CD4-positive, alpha-beta memory T cell (primary cell): ENCODE measurements at regions of chr12 and their contacts with region 1.

Region 1: DNA sequence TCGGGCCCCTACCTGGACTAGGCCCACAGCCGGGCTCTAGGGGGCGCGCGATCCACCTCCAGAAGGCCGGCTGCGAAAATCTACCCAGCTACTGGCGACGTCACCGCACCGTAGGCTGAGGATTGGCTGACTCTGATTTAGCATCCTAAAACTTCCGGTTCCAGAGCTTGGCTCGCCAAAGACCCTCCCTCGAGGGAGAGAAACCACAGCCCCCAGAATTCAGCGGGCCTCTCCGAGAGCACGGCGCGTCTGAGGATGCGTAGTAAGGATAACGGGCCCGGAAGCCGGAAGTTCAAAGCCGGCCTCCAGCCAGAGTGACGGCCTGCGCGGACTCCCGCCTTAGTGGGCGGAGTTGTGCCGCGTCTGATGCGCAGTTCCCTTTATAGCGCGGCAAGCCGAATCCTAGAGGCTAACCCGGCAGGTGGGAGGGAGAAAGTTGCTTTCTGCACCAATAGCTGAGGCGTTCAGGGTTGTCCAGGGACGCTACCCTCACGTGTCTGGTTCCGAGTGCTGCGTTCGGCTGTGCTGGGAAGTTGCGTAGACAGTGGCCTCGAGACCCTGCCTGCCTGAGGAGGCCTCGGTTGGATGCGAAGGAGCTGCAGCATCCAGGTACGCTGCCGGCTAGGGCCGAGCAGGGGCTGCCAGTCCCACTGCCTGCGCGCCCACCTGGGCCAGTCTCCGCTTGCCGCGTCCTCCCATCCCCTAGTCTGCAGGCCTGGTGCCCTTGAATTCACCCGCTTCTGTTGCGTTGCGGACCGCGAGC is at the start of gene COX14:
- DNase-seq: peak; percentile 98 to 100 (median 100)
- H3K4me3 ChIP-seq: peak within 1 kb of the TSS; percentile 98 to 99
- H3K4me3 Mint-ChIP-seq: peak within 1 kb of the TSS; percentile 93 to 100 (median 96)
- H3K27ac ChIP-seq: peak within 1 kb of the TSS; percentile 93
- H3K27ac Mint-ChIP-seq: peak within 1 kb of the TSS; percentile 93 to 100 (median 98)
- H3K4me1 ChIP-seq: peaks cover 43% of the 10 kb centered on the region
- H3K4me1 Mint-ChIP-seq: peaks cover 18 to 50% (median 35%) of the 10 kb centered on the region in 4 donors
- H3K27me3 ChIP-seq: no peaks in the 10 kb centered on the region
- H3K27me3 Mint-ChIP-seq: peaks cover 0 to 1% of the 10 kb centered on the region in 2 donors
- total RNA-seq, gene COX14: 53.3 to 61.6 TPM

Region 2: GRCh38 chr12:49683599-49684309 is 428.1 kb before region 1 on chr12:
- CTCF ChIA-PET with region 1: no interaction called
- POLR2A ChIA-PET with region 1: no interaction called
- intact Hi-C with region 1: no loop called
- DNase-seq: no peak
- H3K4me3 ChIP-seq: no peak overlapping the region
- H3K4me3 Mint-ChIP-seq: no peak overlapping the region
- H3K27ac ChIP-seq: no peak overlapping the region
- H3K27ac Mint-ChIP-seq: peak overlapping the region in 4 of 7 donors; percentile 3 to 57 (median 56)
- H3K4me1 ChIP-seq: peaks cover 8% of the 10 kb centered on the region
- H3K4me1 Mint-ChIP-seq: peaks cover 24 to 46% (median 32%) of the 10 kb centered on the region in 4 donors
- H3K27me3 ChIP-seq: no peaks in the 10 kb centered on the region
- H3K27me3 Mint-ChIP-seq: no peaks in the 10 kb centered on the region

Region 3: DNA sequence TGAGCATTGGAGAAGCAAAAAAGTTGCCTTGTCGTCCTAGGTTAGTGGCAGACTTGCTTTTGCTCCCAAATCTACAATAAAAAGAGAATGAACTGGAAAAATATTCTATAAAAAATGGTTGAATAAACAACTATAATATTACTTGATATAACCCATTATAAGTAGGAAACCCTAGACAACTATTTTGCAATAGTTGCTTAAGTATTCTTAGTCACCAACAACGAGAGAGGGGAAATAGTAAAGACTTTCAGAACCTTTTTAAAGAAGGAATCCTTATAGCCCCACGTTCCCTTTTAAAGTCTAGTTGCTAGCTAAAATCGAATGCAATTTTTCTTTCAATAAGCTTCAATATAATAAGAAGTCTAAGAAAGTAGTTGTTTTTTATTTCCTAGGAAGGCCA is 121.6 kb before region 1 on chr12:
- CTCF ChIA-PET with region 1: no interaction called
- POLR2A ChIA-PET with region 1: no interaction called
- intact Hi-C with region 1: no loop called
- DNase-seq: no peak
- H3K4me3 ChIP-seq: no peak overlapping the region
- H3K4me3 Mint-ChIP-seq: no peak overlapping the region
- H3K27ac ChIP-seq: no peak overlapping the region
- H3K27ac Mint-ChIP-seq: no peak overlapping the region
- H3K4me1 ChIP-seq: no peaks in the 10 kb centered on the region
- H3K4me1 Mint-ChIP-seq: no peaks in the 10 kb centered on the region
- H3K27me3 ChIP-seq: no peaks in the 10 kb centered on the region
- H3K27me3 Mint-ChIP-seq: no peaks in the 10 kb centered on the region

Region 4: DNA sequence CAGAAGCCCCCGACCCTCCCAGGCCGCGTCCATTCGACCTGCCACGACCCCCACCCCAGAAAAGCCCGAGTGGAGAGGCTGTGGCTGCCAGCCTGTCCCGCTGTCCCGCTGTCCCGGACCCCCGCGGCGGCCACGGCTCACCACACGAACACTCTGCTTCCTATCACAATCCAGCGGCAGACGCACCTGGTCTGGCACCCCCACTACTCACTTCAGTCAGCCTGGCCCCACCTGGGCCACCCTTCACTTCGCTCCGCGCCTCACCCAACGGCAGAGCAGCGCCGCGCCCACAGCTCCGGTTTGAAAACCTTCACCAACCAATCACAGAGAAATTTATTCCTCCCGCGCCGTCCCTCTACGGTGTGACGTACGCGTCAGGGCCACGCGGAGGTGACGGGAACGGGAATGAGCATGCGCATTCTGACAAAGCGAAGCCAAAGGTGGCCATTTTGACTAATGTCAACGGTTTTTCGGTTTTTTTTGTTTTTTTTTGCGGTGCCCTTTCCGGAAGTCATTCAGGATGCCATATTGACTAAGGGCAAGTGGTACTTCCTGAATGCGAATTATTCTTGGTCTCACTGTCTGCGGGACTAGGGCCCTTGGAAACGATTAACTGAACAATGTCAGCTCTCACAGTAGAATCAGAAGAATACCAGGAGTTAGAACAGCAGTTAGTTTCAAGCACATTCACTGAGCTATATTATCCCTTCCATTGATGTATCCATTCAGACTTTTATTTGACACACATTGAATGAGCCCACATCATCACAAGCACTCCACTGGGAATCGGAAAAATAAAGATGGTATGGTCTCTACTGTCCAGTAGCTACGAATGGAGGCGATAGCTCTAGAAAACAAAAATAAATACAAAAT is 86.5 kb before region 1 on chr12 and contains the start of gene RACGAP1:
- CTCF ChIA-PET with region 1: interaction called, 5 read pairs
- POLR2A ChIA-PET with region 1: interaction called, 11 read pairs
- intact Hi-C with region 1: loop called (anchors 1 kb)
- DNase-seq: peak; percentile 95 to 98 (median 98)
- H3K4me3 ChIP-seq: peak within 1 kb of the TSS; percentile 48 to 62
- H3K4me3 Mint-ChIP-seq: peak within 1 kb of the TSS; percentile 95 to 100 (median 99)
- H3K27ac ChIP-seq: peak within 1 kb of the TSS; percentile 68
- H3K27ac Mint-ChIP-seq: peak within 1 kb of the TSS; percentile 79 to 97 (median 97)
- H3K4me1 ChIP-seq: peaks cover 10% of the 10 kb centered on the region
- H3K4me1 Mint-ChIP-seq: peaks cover 16 to 18% (median 17%) of the 10 kb centered on the region in 4 donors
- H3K27me3 ChIP-seq: no peaks in the 10 kb centered on the region
- H3K27me3 Mint-ChIP-seq: peaks cover 4 to 5% of the 10 kb centered on the region in 2 donors
- total RNA-seq, gene RACGAP1: 8.5 to 10.4 TPM

Region 5: DNA sequence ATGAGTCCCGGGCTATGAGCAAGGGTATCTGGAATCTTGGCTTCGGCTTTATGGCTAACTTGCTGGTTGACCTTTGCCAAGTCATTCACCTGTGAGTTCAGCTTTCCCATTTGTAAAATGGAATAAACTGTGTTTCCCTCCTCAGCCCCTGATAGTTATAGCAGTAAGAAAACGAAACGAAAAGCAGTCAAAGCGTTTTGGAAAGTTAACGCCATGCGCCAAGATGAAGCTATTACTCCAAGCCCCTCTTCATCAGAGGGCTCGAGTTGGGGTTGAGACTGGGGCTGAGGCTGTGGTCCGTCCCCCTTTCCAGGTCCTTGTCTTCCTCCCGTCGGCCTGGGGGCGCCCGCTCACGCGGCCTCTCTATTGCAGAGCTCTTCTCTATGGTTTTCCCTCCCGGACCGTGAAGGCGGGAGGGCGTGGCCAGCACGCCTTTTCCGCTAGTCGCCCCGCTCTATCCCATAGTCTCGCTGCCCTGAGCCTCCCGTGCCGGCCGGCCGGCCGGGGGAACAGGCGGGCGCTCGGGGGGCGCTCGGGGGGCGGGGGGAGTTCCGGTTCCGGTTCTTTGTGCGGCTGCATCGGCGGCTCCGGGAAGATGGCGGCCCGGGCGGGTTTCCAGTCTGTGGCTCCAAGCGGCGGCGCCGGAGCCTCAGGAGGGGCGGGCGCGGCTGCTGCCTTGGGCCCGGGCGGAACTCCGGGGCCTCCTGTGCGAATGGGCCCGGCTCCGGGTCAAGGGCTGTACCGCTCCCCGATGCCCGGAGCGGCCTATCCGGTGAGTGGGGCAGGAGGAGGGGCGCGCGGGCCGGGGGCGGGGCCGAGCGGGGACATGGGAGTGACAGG is 26.9 kb before region 1 on chr12 and contains the start of gene SMARCD1:
- CTCF ChIA-PET with region 1: interaction called, 316 read pairs
- POLR2A ChIA-PET with region 1: interaction called, 110 read pairs
- intact Hi-C with region 1: loop called (anchors 1 kb)
- DNase-seq: peak; percentile 77 to 88 (median 79)
- H3K4me3 ChIP-seq: peak within 1 kb of the TSS; percentile 73 to 97
- H3K4me3 Mint-ChIP-seq: peak within 1 kb of the TSS; percentile 92 to 96 (median 94)
- H3K27ac ChIP-seq: peak within 1 kb of the TSS; percentile 84
- H3K27ac Mint-ChIP-seq: peak within 1 kb of the TSS; percentile 93 to 99 (median 98)
- H3K4me1 ChIP-seq: peaks cover 27% of the 10 kb centered on the region
- H3K4me1 Mint-ChIP-seq: peaks cover 13 to 37% (median 27%) of the 10 kb centered on the region in 4 donors
- H3K27me3 ChIP-seq: no peaks in the 10 kb centered on the region
- H3K27me3 Mint-ChIP-seq: no peaks in the 10 kb centered on the region
- total RNA-seq, gene SMARCD1: 56.9 to 64.5 TPM

Region 6: DNA sequence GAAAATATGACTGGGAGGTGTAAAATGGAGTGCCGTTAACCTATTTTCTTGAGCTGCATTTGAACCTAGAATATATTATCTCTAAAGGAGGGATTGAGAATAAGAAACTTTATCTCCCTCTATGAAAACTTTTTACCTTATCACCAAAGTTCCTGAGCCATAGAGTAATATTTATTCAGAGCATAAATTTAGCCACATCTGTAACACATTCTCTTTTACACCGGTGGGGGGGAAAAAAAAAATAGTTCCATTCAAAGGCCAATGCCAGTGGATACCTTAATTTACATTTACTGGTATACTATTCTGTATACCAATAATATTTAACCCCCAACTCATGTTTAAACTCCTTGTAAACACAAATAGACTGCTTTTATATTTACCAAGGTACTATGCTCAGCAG is 33.6 kb after region 1 on chr12:
- CTCF ChIA-PET with region 1: interaction called, 14 read pairs
- POLR2A ChIA-PET with region 1: interaction called, 4 read pairs
- intact Hi-C with region 1: no loop called
- DNase-seq: no peak
- H3K4me3 ChIP-seq: no peak overlapping the region
- H3K4me3 Mint-ChIP-seq: no peak overlapping the region
- H3K27ac ChIP-seq: no peak overlapping the region
- H3K27ac Mint-ChIP-seq: no peak overlapping the region
- H3K4me1 ChIP-seq: peaks cover 6% of the 10 kb centered on the region
- H3K4me1 Mint-ChIP-seq: peaks cover 12 to 18% (median 15%) of the 10 kb centered on the region in 4 donors
- H3K27me3 ChIP-seq: no peaks in the 10 kb centered on the region
- H3K27me3 Mint-ChIP-seq: no peaks in the 10 kb centered on the region

Region 7: GRCh38 chr12:50211392-50212070 is 99.7 kb after region 1 on chr12:
- CTCF ChIA-PET with region 1: interaction called, 25 read pairs
- POLR2A ChIA-PET with region 1: interaction called, 9 read pairs
- intact Hi-C with region 1: no loop called
- DNase-seq: no peak
- H3K4me3 ChIP-seq: peak overlapping the region in 1 of 2 donors; percentile 2
- H3K4me3 Mint-ChIP-seq: peak overlapping the region; percentile 32 to 87 (median 76)
- H3K27ac ChIP-seq: peak overlapping the region; percentile 62
- H3K27ac Mint-ChIP-seq: peak overlapping the region; percentile 88 to 97 (median 95)
- H3K4me1 ChIP-seq: peaks cover 53% of the 10 kb centered on the region
- H3K4me1 Mint-ChIP-seq: peaks cover 32 to 54% (median 40%) of the 10 kb centered on the region in 4 donors
- H3K27me3 ChIP-seq: no peaks in the 10 kb centered on the region
- H3K27me3 Mint-ChIP-seq: no peaks in the 10 kb centered on the region

Region 8: GRCh38 chr12:51238510-51239334 is 1126.8 kb after region 1 on chr12 and contains the start of gene DAZAP2:
- CTCF ChIA-PET with region 1: no interaction called
- POLR2A ChIA-PET with region 1: no interaction called
- intact Hi-C with region 1: loop called (anchors 10 kb)
- DNase-seq: peak; percentile 91 to 95 (median 94)
- H3K4me3 ChIP-seq: peak within 1 kb of the TSS; percentile 98 to 100
- H3K4me3 Mint-ChIP-seq: peak within 1 kb of the TSS; percentile 93 to 99 (median 98)
- H3K27ac ChIP-seq: peak within 1 kb of the TSS; percentile 100
- H3K27ac Mint-ChIP-seq: peak within 1 kb of the TSS; percentile 99 to 100 (median 100)
- H3K4me1 ChIP-seq: peaks cover 40% of the 10 kb centered on the region
- H3K4me1 Mint-ChIP-seq: peaks cover 27 to 57% (median 40%) of the 10 kb centered on the region in 4 donors
- H3K27me3 ChIP-seq: no peaks in the 10 kb centered on the region
- H3K27me3 Mint-ChIP-seq: peaks cover 0 to 1% of the 10 kb centered on the region in 2 donors
- total RNA-seq, gene DAZAP2: 275 to 286 TPM